Lower leg skin (tissue), 4 donors: ENCODE measurements at regions of chr19 and their contacts with region 1.

Region 1: DNA sequence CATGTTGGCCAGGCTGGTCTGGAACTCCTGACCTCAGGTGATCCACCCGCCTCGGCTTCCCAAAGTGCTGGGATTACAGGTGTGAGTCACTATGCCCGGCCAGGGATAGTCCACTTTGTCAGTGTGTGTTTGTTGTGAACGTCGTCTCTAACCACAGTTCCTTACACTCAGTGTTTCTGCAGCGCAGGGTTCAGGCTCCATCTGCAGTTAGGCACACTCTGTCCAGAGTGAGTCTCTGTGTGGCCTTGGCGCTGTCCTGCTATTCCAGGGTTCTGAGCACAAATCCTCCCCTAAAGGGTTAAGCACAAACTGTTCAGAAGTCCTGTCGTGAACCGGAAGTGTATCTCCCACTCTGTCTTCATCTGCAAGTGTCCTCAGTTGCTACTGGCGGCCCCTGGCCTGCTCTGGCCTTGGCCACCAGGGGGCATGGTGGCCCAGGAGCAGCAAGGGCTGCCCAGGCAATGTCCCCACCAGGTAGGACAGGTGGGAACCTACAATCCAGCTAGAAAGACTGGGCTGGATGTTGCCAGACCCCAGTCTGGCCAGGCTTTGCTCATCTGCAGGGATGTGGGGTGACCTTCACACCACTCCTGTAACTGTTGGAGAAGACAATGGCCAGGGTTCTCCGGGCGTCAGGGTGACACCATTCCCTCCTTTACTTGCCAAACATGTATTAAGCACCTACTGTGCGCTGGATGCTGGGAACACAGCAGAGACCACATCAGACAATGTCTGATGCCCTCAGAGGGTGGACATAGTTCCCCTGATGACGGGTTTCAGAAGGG is 38.7 kb upstream of the GATAD2A start:
- DNase-seq: no peak
- H3K4me3 ChIP-seq: no peak overlapping the region
- CTCF ChIP-seq: peak in 1 of 3 donors; percentile 94
- POLR2A ChIP-seq: no peak

Region 2: DNA sequence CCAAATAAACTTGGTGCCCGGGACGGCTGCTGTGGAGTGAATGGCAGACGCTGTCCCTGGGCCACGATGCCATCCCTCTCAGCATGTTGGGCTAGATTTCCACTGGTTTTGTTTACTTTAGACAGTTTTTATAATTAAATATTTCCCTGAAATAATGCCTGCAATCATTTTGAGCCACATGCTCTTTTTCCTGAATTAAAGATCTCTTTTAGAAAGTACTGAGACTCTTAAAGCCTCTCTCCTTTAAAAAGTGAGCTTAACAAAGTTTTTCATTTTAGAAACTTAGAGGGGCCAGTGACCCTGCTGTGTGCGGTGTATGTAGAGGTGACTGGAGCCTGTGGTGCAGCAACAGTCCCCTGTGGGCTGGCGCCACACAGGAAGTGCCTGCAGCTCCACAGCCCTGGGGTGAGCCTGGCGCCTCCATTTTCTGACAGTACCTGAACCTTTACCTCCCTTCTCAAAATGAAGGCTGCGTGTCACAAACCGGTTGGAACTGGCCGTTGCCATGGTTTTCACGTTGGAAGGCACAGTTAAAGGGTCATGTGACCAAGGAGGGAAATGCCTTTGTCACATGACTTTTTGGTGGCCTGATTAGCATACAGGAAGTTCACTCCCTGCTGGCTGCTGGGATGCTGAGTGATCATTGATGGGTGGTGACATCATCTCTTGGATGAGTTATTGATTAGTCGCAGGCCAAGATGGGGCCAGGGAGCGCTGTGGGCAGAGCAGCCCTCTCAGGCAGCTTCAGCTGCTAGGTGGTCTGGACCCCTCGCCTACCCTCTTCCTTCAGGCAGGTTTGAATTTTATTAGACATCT is 122.3 kb after region 1 on chr19:
- intact Hi-C with region 1: loop called (anchors 5 kb)
- DNase-seq: peak; percentile 87 to 96
- H3K4me3 ChIP-seq: no peak overlapping the region
- CTCF ChIP-seq: no peak
- POLR2A ChIP-seq: no peak